ENCODE measurements at regions of chr14 and their contacts with region 1.

Region 1: DNA sequence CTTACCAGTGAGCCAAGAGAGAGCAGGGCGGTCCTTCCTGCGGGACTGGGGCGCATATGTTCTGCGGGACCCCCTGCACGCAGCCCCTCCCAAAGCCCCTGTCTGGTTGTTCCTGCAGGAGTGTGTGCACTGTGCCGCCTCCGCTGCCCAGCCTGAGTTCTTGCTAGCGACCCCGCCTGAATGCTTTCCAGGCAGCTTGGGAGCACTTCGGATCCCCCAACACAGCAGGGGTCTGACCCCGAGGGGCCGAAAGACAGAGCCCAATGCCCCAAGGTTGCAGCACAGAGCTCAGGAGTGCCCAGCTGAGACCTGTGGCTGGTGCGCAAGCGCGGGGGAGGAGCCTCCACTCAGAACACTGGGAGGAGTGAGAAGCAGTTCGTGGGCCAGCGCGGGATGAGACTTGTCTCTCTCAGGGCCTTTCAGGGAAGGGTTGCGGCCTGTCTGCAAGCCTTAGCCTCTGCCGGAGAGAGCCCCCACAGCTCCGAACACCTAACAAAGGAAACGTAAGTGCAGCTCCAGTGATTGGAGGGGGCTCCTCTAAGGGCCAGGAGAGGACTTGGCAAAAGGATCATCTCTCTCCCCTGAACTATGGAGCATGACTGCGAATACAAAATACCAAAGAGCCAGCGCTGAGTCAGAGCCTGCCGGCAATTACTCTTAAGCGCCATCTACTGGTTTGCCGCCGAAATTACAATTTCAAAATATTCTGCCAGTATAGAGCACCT is 50.5 kb downstream of the GTF2A1 start:
- DNase-seq: peak; percentile 98
- H3K4me3 ChIP-seq: peak overlapping the region; percentile 70 to 83 (median 72)
- H3K27ac ChIP-seq: peak overlapping the region; percentile 90 to 93 (median 92)
- H3K4me1 ChIP-seq: peaks cover 13 to 15% (median 15%) of the 10 kb centered on the region in 4 donors
- H3K27me3 ChIP-seq: no peaks in the 10 kb centered on the region
- CTCF ChIP-seq: peak; percentile 76 to 88 (median 88)
- EP300 ChIP-seq: no peak
- POLR2A ChIP-seq: no peak

Region 2: DNA sequence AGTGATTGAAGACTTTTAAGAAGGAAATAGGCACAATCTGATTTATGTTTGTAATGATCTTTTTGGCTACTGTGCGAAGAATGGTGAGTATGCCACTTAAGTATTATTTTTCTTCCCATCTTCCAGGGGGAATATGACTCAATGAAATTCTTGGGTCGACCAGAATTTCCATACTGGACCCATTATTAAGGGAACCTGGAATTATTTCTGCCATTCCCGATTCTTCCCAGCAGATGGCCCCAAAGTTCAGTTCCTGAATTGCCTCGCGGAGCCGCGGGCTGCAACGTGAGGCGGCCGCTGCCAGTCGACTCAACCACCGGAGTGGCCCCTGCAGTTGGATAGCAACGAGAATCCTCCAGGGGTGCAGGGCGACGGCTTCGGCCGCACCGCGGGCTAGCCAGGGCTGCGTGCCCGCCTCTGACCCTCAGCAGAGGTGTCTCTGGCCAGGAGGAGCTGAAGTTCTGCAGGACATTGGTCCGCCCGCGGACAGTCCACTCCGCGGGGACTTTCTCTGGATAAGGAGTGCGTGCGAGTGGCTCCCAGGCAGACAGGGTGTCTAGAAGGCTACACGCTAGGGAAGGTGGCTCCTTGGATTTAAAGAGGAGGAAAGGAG is 215.5 kb before region 1 on chr14:
- intact Hi-C with region 1: loop called (anchors 5 kb)
- DNase-seq: no peak
- H3K4me3 ChIP-seq: peak overlapping the region; percentile 53 to 65 (median 58)
- H3K27ac ChIP-seq: no peak overlapping the region
- H3K4me1 ChIP-seq: peaks cover 0 to 10% (median 9%) of the 10 kb centered on the region in 4 donors
- H3K27me3 ChIP-seq: peaks cover 0 to 10% (median 4%) of the 10 kb centered on the region in 4 donors
- CTCF ChIP-seq: peak; percentile 77 to 90 (median 84)
- EP300 ChIP-seq: no peak
- POLR2A ChIP-seq: no peak

Region 3: GRCh38 chr14:80996049-80996901 is 174.0 kb before region 1 on chr14:
- intact Hi-C with region 1: loop called (anchors 2 kb)
- DNase-seq: no peak
- H3K4me3 ChIP-seq: peak overlapping the region in 1 of 4 donors; percentile 32
- H3K27ac ChIP-seq: no peak overlapping the region
- H3K4me1 ChIP-seq: peaks cover 3 to 8% (median 6%) of the 10 kb centered on the region in 4 donors
- H3K27me3 ChIP-seq: peaks cover 0 to 8% (median 0%) of the 10 kb centered on the region in 4 donors
- CTCF ChIP-seq: peak; percentile 61 to 71 (median 70)
- EP300 ChIP-seq: no peak
- POLR2A ChIP-seq: no peak

Region 4: DNA sequence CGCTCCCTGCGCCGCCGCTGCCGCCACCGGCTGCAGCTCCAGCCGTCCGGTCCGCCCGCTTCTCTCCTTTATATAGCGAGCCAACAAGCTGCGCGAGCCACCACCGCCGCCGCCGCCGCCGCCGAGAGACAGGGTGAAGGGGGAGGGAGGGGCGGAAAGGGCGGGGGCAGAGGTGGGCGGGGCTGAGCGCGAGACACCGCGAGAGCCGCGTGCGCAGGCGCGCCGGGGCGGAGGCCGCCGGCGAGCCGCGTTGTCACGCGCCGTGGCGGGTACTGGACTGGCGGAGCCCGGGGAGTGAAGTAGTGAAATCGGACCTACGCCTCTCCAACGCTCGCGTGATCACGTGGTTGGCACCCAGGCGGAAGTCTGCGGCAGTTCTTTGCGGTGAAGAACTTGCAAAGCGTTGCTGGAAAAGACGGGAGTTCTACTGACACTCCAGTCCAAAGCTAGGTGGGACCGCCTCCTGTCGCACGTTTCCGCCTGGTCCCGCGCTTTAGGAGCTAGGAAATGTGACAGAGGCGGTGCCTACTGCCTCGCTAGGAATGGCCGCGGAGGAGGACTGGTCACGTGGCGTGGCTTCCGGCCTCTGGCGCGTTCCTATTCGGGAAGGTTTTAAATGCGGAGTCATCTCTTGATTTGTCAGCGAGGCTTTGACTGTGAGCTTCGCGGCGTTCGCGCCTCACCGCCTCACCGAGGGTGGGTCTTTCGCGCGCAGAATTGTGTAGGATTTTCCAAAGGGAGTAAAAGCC is 50.7 kb after region 1 on chr14 and contains the start of gene GTF2A1:
- intact Hi-C with region 1: loop called (anchors 5 kb)
- DNase-seq: peak; percentile 99
- H3K4me3 ChIP-seq: peak within 1 kb of the TSS; percentile 78 to 84 (median 81)
- H3K27ac ChIP-seq: peak within 1 kb of the TSS; percentile 96 to 99 (median 98)
- H3K4me1 ChIP-seq: peaks cover 22 to 35% (median 32%) of the 10 kb centered on the region in 4 donors
- H3K27me3 ChIP-seq: no peaks in the 10 kb centered on the region
- CTCF ChIP-seq: no peak
- EP300 ChIP-seq: no peak
- POLR2A ChIP-seq: peak; percentile 98
- total RNA-seq, gene GTF2A1: 17.1 to 35.1 (median 28.4) TPM